ENCODE measurements at regions of chr2 and their contacts with region 1.

Region 1: DNA sequence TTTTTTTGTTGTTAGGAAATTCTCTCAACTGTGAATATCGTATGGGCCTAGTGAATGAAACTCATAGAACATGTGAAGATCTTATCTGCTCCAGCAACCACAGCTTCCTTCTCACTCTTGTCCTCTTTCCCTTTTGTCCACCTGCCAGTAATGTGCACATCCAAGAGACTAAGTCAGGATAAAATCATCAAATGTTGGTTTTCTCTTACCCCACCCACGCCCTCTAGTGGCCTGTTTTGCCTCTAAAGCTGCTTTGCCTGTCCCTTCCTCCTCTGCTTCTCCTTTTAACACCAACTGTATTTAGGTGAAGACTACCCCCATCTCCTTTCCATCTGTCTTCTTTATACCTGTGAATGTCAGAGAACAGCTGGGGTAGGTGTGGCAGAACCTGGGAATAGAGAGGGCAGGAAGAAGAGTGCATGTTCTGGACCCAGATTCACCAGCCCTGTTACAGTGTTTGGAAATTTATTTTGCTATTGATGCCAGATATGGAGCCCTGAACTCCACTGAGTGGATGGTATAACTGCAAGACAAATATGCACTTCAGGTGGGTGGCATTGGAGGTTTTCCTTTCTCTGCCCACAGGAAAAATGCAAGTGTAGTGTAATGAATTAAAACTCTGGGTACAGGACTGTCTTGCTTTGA is 8.4 kb upstream of the MGAT5 start:
- DNase-seq: peak; percentile 43
- H3K4me3 ChIP-seq: no peak overlapping the region; a peak in 1 of 4 replicates
- H3K27ac ChIP-seq: peak overlapping the region in 1 of 2 experiments; percentile 79; a peak in 2 of 4 replicates
- H3K4me1 ChIP-seq: peaks cover 6 to 33% of the 10 kb centered on the region in 2 experiments; a peak in 3 of 4 replicates
- H3K27me3 ChIP-seq: no peaks in the 10 kb centered on the region
- CTCF ChIP-seq: peak; percentile 90
- EP300 ChIP-seq: no peak
- RAD21 ChIP-seq: peak; percentile 78

Region 2: GRCh38 chr2:134207564-134208209 is 37.8 kb before region 1 on chr2:
- CTCF ChIA-PET with region 1: interaction called, 18 read pairs
- POLR2A ChIA-PET with region 1: no interaction called
- DNase-seq: peak; percentile 44
- H3K4me3 ChIP-seq: no peak overlapping the region; a peak in 1 of 4 replicates
- H3K27ac ChIP-seq: no peak overlapping the region
- H3K4me1 ChIP-seq: peaks cover 6 to 17% of the 10 kb centered on the region in 2 experiments; a peak in 3 of 4 replicates
- H3K27me3 ChIP-seq: no peaks in the 10 kb centered on the region
- CTCF ChIP-seq: peak; percentile 76
- EP300 ChIP-seq: no peak
- RAD21 ChIP-seq: peak; percentile 70

Region 3: GRCh38 chr2:134261398-134262131 is 16.1 kb after region 1 on chr2:
- CTCF ChIA-PET with region 1: interaction called, 24 read pairs
- POLR2A ChIA-PET with region 1: no interaction called
- DNase-seq: no peak
- H3K4me3 ChIP-seq: no peak overlapping the region
- H3K27ac ChIP-seq: peak overlapping the region in 1 of 2 experiments; percentile 62; a peak in 2 of 4 replicates
- H3K4me1 ChIP-seq: peaks cover 5 to 40% of the 10 kb centered on the region in 2 experiments; a peak in 1 of 4 replicates
- H3K27me3 ChIP-seq: no peaks in the 10 kb centered on the region
- CTCF ChIP-seq: no peak
- EP300 ChIP-seq: no peak
- RAD21 ChIP-seq: no peak

Region 4: GRCh38 chr2:134320930-134321329 is 75.5 kb after region 1 on chr2:
- CTCF ChIA-PET with region 1: interaction called, 21 read pairs
- POLR2A ChIA-PET with region 1: no interaction called
- DNase-seq: no peak
- H3K4me3 ChIP-seq: no peak overlapping the region
- H3K27ac ChIP-seq: no peak overlapping the region
- H3K4me1 ChIP-seq: peaks cover 0 to 18% of the 10 kb centered on the region in 2 experiments; a peak in 2 of 4 replicates
- H3K27me3 ChIP-seq: no peaks in the 10 kb centered on the region
- CTCF ChIP-seq: no peak
- EP300 ChIP-seq: no peak
- RAD21 ChIP-seq: no peak

Region 5: GRCh38 chr2:134402410-134402809 is 156.9 kb after region 1 on chr2:
- CTCF ChIA-PET with region 1: interaction called, 11 read pairs
- POLR2A ChIA-PET with region 1: no interaction called
- DNase-seq: no peak
- H3K4me3 ChIP-seq: no peak overlapping the region
- H3K27ac ChIP-seq: peak overlapping the region in 1 of 2 experiments; percentile 85; a peak in 1 of 4 replicates
- H3K4me1 ChIP-seq: peaks cover 17 to 33% of the 10 kb centered on the region in 2 experiments
- H3K27me3 ChIP-seq: no peaks in the 10 kb centered on the region
- CTCF ChIP-seq: no peak
- EP300 ChIP-seq: no peak
- RAD21 ChIP-seq: no peak

Measured in SK-N-SH (cell line).